CD14-positive monocyte (primary cell): ENCODE measurements at regions of chr1 and their contacts with region 1.

Region 1: DNA sequence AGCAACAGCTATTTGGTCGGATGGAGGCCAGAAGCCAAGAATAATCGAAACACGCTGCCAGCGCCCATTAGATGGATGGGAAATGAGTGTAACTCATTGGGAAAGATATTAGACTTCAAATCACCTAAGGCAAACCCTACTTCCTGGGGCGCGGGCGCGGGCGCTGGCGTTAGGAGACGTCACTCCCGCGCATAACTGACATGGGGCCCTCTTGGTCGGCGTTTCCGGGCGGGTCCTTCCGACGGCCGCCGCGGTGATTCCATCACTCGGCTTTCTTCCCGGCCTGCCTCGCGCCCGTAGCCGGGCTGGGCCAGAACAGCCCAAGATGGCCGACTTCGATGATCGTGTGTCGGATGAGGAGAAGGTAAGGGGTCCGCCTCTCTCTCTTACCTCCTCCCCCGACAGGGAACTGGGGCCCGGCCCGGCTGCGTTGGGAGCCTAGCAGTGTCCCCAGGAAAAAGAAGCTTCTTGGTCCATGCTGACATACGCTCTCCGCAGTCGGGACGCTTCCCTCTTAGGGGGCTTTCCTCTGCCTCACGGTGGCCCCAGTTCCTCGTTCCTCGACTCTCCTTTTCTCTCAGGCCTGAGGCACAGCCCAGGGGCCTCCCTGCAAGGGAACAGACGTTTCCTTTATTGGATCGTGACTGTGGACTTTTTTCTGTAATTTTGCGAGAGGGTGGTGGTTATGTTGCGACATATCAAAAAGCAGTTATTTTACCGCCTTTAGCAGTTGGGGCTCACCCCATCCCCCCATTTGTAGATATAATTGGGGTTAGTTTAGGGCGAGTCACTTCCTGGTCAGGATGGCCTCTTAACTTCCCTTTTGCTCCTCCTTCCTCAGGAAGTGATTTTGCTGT is at the start of gene CAPZA1:
- DNase-seq: peak; percentile 92 to 94 (median 93)
- H3K4me3 ChIP-seq: peak within 1 kb of the TSS; percentile 80 to 96 (median 95)
- H3K4me3 Mint-ChIP-seq: peak within 1 kb of the TSS; percentile 99
- H3K27ac ChIP-seq: peak within 1 kb of the TSS; percentile 99 to 100
- H3K27ac Mint-ChIP-seq: peak within 1 kb of the TSS; percentile 99 to 100 (median 100)
- H3K4me1 ChIP-seq: peaks cover 30 to 52% of the 10 kb centered on the region in 2 donors
- H3K4me1 Mint-ChIP-seq: peaks cover 41% of the 10 kb centered on the region
- H3K27me3 ChIP-seq: no peaks in the 10 kb centered on the region
- H3K27me3 Mint-ChIP-seq: no peaks in the 10 kb centered on the region
- CTCF ChIP-seq: no peak
- polyA plus RNA-seq, gene CAPZA1: 93.4 to 357 (median 339) TPM

Region 2: DNA sequence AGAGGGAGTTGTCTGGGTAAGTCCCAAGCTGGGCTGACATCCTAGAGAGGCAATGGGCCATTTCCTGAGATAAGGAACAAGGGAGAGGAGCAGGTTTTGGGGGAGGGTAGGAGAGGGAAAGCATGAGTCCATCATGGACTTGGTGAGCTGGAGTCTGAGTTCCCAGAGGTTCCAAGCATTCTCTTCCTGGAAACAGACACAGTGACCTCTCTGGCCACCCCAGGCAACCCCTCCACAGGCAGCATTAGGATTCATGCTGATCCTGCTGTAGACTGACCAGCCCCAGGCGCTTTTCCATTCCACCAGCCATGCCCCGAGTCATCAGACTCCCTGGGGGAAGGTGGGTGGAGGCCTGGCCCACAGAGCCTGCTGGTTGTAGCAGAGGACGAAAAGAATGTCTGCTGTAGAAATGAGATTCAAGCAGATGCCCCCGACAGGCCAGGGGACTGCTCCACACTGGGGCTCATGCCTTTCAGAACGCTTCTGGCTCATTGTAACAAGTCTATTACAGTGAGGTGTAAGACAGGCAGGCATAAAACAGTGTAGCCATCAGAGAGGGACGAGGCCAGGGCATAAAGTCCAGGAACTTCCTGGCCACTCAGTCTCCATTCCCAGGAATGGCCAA is 682.5 kb before region 1 on chr1:
- intact Hi-C with region 1: no loop called
- DNase-seq: no peak
- H3K4me3 ChIP-seq: no peak overlapping the region
- H3K4me3 Mint-ChIP-seq: no peak overlapping the region
- H3K27ac ChIP-seq: no peak overlapping the region
- H3K27ac Mint-ChIP-seq: no peak overlapping the region
- H3K4me1 ChIP-seq: no peaks in the 10 kb centered on the region
- H3K4me1 Mint-ChIP-seq: no peaks in the 10 kb centered on the region
- H3K27me3 ChIP-seq: no peaks in the 10 kb centered on the region
- H3K27me3 Mint-ChIP-seq: peaks cover 0 to 2% (median 2%) of the 10 kb centered on the region in 3 donors
- CTCF ChIP-seq: no peak

Region 3: GRCh38 chr1:112390775-112391602 is 228.8 kb before region 1 on chr1:
- intact Hi-C with region 1: loop called (anchors 5 kb)
- DNase-seq: peak; percentile 79 to 86 (median 83)
- H3K4me3 ChIP-seq: peak overlapping the region in 1 of 3 experiments; percentile 51
- H3K4me3 Mint-ChIP-seq: peak overlapping the region; percentile 57 to 60
- H3K27ac ChIP-seq: no peak overlapping the region
- H3K27ac Mint-ChIP-seq: peak overlapping the region in 2 of 7 donors; percentile 25 to 44
- H3K4me1 ChIP-seq: peaks cover 33 to 39% of the 10 kb centered on the region in 2 donors
- H3K4me1 Mint-ChIP-seq: peaks cover 30% of the 10 kb centered on the region
- H3K27me3 ChIP-seq: peaks cover 0 to 2% of the 10 kb centered on the region in 2 donors
- H3K27me3 Mint-ChIP-seq: peaks cover 3 to 13% (median 8%) of the 10 kb centered on the region in 3 donors
- CTCF ChIP-seq: peak; percentile 88

Region 4: DNA sequence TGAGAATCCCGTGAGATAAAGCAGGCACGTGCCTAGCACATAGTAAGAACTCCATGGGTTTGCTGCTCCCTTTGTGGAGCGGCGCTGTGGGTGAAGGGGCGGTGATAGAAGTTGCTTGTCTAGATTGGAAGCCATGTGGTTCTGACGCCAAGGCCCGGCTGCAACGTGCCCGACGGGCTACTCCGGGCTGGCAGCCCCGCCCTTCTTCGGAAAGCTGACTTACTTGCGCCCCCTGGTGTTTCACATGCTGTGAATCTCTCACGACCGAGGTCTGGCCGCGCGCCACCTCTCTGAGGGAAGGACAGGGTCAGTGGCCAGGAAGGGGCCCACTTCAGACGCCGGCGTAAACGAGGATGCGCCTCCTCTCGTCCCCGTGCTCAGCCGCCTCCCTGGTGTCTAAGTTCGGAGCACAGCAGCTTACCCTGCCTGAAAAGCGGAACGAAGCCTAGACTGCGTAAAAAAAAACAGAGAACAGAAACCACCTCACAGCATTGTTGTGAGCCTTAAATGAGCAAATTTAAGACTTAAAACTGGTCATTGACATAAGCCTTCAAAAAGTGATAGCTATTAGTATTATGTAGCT is 153.6 kb before region 1 on chr1:
- intact Hi-C with region 1: loop called in 1 of 2 experiments (anchors 10 kb)
- DNase-seq: peak; percentile 96 to 98 (median 98)
- H3K4me3 ChIP-seq: peak overlapping the region in 2 of 3 experiments; percentile 0 to 49
- H3K4me3 Mint-ChIP-seq: peak overlapping the region; percentile 66 to 78
- H3K27ac ChIP-seq: peak overlapping the region; percentile 69 to 87
- H3K27ac Mint-ChIP-seq: peak overlapping the region; percentile 84 to 95 (median 89)
- H3K4me1 ChIP-seq: peaks cover 24 to 28% of the 10 kb centered on the region in 2 donors
- H3K4me1 Mint-ChIP-seq: peaks cover 42% of the 10 kb centered on the region
- H3K27me3 ChIP-seq: no peaks in the 10 kb centered on the region
- H3K27me3 Mint-ChIP-seq: peaks cover 3 to 5% (median 3%) of the 10 kb centered on the region in 3 donors
- CTCF ChIP-seq: peak; percentile 83